ENCODE measurements at regions of chr5 and their contacts with region 1.

Region 1: DNA sequence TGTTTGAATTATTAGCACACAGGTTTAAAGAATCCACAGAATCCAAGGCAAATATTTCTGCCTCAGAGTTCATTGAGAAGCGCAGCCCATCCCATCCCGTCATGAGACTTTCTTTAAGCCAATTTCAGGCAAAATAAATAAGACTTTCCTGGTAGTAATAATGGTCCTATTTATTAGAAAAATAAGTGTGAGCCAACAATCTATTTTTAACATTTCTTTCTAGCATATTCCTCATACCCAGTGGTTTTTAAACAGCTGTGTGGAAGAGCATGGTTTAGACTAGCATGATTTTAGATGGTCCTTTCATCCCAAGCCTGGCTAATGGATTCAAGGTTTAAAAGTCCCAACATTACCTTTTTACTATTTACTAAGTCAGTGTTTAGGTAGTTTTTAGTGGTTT is 125.8 kb downstream of the SCAMP1 start:
- DNase-seq: no peak
- H3K4me3 ChIP-seq: no peak overlapping the region
- H3K27ac ChIP-seq: no peak overlapping the region
- H3K4me1 ChIP-seq: no peaks in the 10 kb centered on the region
- H3K27me3 ChIP-seq: no peaks in the 10 kb centered on the region
- CTCF ChIP-seq: no peak
- POLR2A ChIP-seq: no peak

Region 2: GRCh38 chr5:78803353-78803752 is 317.1 kb after region 1 on chr5:
- intact Hi-C with region 1: no loop called
- DNase-seq: no peak
- H3K4me3 ChIP-seq: no peak overlapping the region
- H3K27ac ChIP-seq: no peak overlapping the region
- H3K4me1 ChIP-seq: no peaks in the 10 kb centered on the region
- H3K27me3 ChIP-seq: no peaks in the 10 kb centered on the region
- CTCF ChIP-seq: no peak
- POLR2A ChIP-seq: no peak

Region 3: DNA sequence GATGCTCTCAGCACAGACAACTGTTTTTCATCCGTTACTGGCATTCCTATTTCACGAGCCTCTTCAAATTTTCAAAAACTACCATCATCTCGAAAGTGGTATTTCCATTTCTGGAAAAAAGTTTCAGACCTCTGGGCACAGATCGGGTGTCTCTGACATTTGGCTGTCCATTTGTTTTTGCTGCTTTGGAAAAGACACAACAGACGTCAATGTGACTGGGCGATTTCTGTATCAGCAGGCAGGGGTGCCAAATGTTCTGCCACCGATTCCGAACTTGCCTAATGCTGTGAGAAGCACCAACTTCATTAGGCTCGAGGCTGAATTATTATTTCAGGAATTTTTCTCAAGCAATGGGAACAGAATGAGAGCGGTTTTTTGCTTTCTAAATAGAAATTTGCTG is 393.3 kb after region 1 on chr5:
- intact Hi-C with region 1: loop called (anchors 5 kb)
- DNase-seq: no peak
- H3K4me3 ChIP-seq: no peak overlapping the region
- H3K27ac ChIP-seq: no peak overlapping the region
- H3K4me1 ChIP-seq: no peaks in the 10 kb centered on the region
- H3K27me3 ChIP-seq: no peaks in the 10 kb centered on the region
- CTCF ChIP-seq: no peak
- POLR2A ChIP-seq: no peak